ENCODE measurements at regions of chr6 and their contacts with region 1.

Region 1: GRCh38 chr6:112443179-112444065 is 96.3 kb downstream of the RFPL4B start:
- DNase-seq: no peak
- ATAC-seq: no peak
- H3K4me3 ChIP-seq: no peak overlapping the region
- H3K4me3 Mint-ChIP-seq: no peak overlapping the region
- H3K27ac ChIP-seq: no peak overlapping the region
- H3K27ac Mint-ChIP-seq: no peak overlapping the region
- H3K4me1 ChIP-seq: no peaks in the 10 kb centered on the region
- H3K4me1 Mint-ChIP-seq: no peaks in the 10 kb centered on the region
- H3K27me3 ChIP-seq: no peaks in the 10 kb centered on the region
- H3K27me3 Mint-ChIP-seq: peaks cover 0 to 5% (median 0%) of the 10 kb centered on the region in 5 donors

Region 2: DNA sequence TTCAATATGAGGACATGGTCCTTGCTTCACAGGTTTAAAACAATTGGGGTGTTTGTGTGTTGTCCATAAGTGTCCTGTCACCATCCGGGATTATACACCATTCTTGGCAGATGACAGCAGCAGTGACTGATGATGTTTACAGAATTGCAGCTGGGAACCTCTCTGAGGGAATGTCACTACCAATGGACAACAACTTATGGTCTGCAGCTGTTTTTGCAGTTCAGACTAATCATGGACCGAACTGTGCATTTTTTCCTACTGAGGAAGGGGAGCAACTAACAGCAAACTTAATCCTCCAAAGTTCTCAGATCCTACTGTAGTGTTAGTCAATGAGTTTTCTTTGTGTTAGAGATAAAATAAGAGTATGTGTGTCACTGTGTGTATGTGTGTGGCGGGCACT is 330.0 kb before region 1 on chr6:
- CTCF ChIA-PET with region 1: no interaction called
- POLR2A ChIA-PET with region 1: no interaction called
- intact Hi-C with region 1: no loop called
- DNase-seq: no peak
- ATAC-seq: no peak
- H3K4me3 ChIP-seq: no peak overlapping the region
- H3K4me3 Mint-ChIP-seq: no peak overlapping the region
- H3K27ac ChIP-seq: no peak overlapping the region
- H3K27ac Mint-ChIP-seq: no peak overlapping the region
- H3K4me1 ChIP-seq: no peaks in the 10 kb centered on the region
- H3K4me1 Mint-ChIP-seq: peaks cover 0 to 19% (median 0%) of the 10 kb centered on the region in 7 donors
- H3K27me3 ChIP-seq: no peaks in the 10 kb centered on the region
- H3K27me3 Mint-ChIP-seq: peaks cover 14 to 33% (median 31%) of the 10 kb centered on the region in 5 donors

Region 3: GRCh38 chr6:112457886-112458285 is 14.5 kb after region 1 on chr6:
- CTCF ChIA-PET with region 1: no interaction called
- POLR2A ChIA-PET with region 1: no interaction called
- intact Hi-C with region 1: loop called in 1 of 2 experiments (anchors 2 kb)
- DNase-seq: no peak
- ATAC-seq: no peak
- H3K4me3 ChIP-seq: no peak overlapping the region
- H3K4me3 Mint-ChIP-seq: no peak overlapping the region
- H3K27ac ChIP-seq: no peak overlapping the region
- H3K27ac Mint-ChIP-seq: no peak overlapping the region
- H3K4me1 ChIP-seq: no peaks in the 10 kb centered on the region
- H3K4me1 Mint-ChIP-seq: peaks cover 0 to 1% (median 0%) of the 10 kb centered on the region in 7 donors
- H3K27me3 ChIP-seq: no peaks in the 10 kb centered on the region
- H3K27me3 Mint-ChIP-seq: peaks cover 0 to 10% (median 6%) of the 10 kb centered on the region in 5 donors